ENCODE measurements at regions of chr19 and their contacts with region 1.

Region 1: DNA sequence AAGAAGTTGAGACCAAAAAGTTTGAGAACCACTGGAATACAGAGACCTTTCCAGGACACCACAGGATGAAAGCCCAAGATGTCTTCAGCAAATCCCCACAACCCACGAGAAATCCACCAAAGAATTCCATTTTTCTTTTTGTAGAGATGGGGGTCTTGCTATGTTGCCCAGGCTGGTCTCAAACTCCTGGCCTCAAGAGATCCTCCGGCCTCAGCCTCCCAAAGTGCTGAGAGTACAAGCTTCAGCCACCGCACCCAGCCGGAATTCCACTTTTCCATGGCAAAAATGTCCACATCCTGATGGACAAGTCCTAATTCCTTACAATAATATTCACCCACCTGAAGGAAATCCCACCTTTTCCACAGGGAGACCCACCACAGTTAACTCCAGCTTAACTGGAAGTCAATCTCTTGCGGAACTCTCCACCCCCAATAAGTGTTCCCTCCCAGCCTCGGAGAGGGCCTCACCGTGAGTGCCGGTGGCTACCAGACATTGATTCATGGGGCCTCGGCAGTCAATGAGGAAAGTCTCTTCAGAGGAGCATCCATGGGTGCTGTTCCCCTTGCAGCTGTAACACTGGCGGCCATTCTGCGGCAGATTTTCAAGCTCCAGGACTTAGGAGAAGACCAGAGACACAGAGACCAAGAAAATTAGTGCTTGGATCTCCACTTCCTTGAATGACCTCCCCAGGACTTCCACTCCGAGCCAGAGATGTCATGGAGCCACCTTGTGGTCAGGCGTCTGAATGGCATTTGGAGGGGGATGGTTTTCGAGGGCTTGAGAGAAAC is 12.3 kb upstream of the CADM4 start:
- DNase-seq: peak; percentile 67 to 86 (median 74)
- H3K4me3 ChIP-seq: peak overlapping the region in 1 of 4 donors; percentile 31
- H3K27ac ChIP-seq: peak overlapping the region in 1 of 5 donors; percentile 3
- H3K4me1 ChIP-seq: no peaks in the 10 kb centered on the region
- H3K27me3 ChIP-seq: no peaks in the 10 kb centered on the region
- CTCF ChIP-seq: peak; percentile 75 to 84 (median 80)
- POLR2A ChIP-seq: no peak

Region 2: GRCh38 chr19:43446746-43447489 is 205.0 kb before region 1 on chr19:
- intact Hi-C with region 1: loop called in 1 of 2 experiments (anchors 10 kb)
- DNase-seq: peak; percentile 69 to 90 (median 77)
- H3K4me3 ChIP-seq: no peak overlapping the region
- H3K27ac ChIP-seq: no peak overlapping the region
- H3K4me1 ChIP-seq: peaks cover 0 to 1% of the 10 kb centered on the region in 2 donors
- H3K27me3 ChIP-seq: no peaks in the 10 kb centered on the region
- CTCF ChIP-seq: peak; percentile 88 to 96 (median 96)
- POLR2A ChIP-seq: no peak

Region 3: DNA sequence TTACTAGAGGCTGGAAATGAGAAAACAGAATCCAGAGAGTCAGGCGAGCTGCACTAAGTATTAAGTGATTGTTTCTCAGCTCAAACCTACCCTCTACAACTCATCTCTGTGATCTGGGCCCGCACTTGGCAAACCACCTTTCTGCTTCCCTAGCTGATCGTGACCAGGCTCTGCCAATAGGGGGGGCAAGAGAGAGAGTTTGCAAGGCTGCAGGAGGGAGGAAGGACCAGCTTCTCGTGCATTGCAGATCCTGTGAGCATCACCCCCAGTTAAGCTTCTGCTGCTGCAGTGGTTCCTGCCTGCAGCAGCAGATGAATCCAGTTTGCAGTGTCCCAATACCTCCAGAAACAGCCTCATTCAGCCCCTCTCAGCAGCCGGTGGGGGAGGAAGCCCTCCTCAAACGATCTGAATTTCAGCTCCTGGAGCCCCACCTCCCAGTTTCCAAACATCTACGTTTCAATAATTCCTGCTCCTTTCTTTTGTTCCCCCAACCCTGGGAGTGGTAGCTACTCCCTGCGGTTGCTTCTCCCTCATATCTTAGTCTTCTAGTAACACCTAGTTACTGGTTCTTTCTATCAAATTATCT is 96.7 kb before region 1 on chr19:
- intact Hi-C with region 1: loop called in 1 of 2 experiments (anchors 5 kb)
- DNase-seq: peak; percentile 81 to 90 (median 82)
- H3K4me3 ChIP-seq: no peak overlapping the region
- H3K27ac ChIP-seq: no peak overlapping the region
- H3K4me1 ChIP-seq: peaks cover 7 to 10% of the 10 kb centered on the region in 2 donors
- H3K27me3 ChIP-seq: no peaks in the 10 kb centered on the region
- CTCF ChIP-seq: peak; percentile 49 to 72 (median 60)
- POLR2A ChIP-seq: no peak

Region 4: GRCh38 chr19:43595999-43596841 is 55.7 kb before region 1 on chr19 and contains the starts of genes IRGQ and ZNF576:
- intact Hi-C with region 1: loop called (anchors 10 kb)
- DNase-seq: peak; percentile 99 to 100 (median 100)
- H3K4me3 ChIP-seq: peak within 1 kb of the TSS; percentile 24 to 65 (median 54)
- H3K27ac ChIP-seq: peak within 1 kb of the TSS; percentile 92 to 97 (median 95)
- H3K4me1 ChIP-seq: peaks cover 20 to 30% of the 10 kb centered on the region in 2 donors
- H3K27me3 ChIP-seq: no peaks in the 10 kb centered on the region
- CTCF ChIP-seq: peak in 2 of 6 experiments; percentile 9 to 18
- POLR2A ChIP-seq: peak; percentile 93 to 96
- total RNA-seq, gene IRGQ: 14.0 to 57.9 (median 23.8) TPM
- total RNA-seq, gene ZNF576: 15.2 to 114 (median 25.5) TPM

Region 5: GRCh38 chr19:43606569-43607229 is 45.3 kb before region 1 on chr19:
- intact Hi-C with region 1: loop called in 1 of 2 experiments (anchors 10 kb)
- DNase-seq: no peak
- H3K4me3 ChIP-seq: no peak overlapping the region
- H3K27ac ChIP-seq: no peak overlapping the region
- H3K4me1 ChIP-seq: no peaks in the 10 kb centered on the region
- H3K27me3 ChIP-seq: no peaks in the 10 kb centered on the region
- CTCF ChIP-seq: no peak
- POLR2A ChIP-seq: no peak

Measured in adrenal gland (tissue), 19 donors.